Activated T-helper 1 cell treated with anti-CD3 and anti-CD28 coated beads, Interleukin-12 subunit alpha, Interleukin-12 subunit beta, Interleukin-2, Interleukin-4 antibody, amounts not matched to agents 30 ng/mL and 10 ng/mL and 1 ng/mL, durations not matched to agents 14 hours and 24 hours and 36 hours (primary cell): ENCODE measurements at regions of chr16 and their contacts with region 1.

Region 1: GRCh38 chr16:56608043-56608875 is at the start of gene MT2A:
- DNase-seq: peak; percentile 89
- H3K4me3 Mint-ChIP-seq: peak within 1 kb of the TSS; percentile 97
- H3K27ac Mint-ChIP-seq: peak within 1 kb of the TSS; percentile 98
- H3K4me1 Mint-ChIP-seq: peaks cover 58% of the 10 kb centered on the region
- H3K27me3 Mint-ChIP-seq: no peaks in the 10 kb centered on the region
- total RNA-seq, gene MT2A: 348 and 365 TPM in 2 replicates

Region 2: DNA sequence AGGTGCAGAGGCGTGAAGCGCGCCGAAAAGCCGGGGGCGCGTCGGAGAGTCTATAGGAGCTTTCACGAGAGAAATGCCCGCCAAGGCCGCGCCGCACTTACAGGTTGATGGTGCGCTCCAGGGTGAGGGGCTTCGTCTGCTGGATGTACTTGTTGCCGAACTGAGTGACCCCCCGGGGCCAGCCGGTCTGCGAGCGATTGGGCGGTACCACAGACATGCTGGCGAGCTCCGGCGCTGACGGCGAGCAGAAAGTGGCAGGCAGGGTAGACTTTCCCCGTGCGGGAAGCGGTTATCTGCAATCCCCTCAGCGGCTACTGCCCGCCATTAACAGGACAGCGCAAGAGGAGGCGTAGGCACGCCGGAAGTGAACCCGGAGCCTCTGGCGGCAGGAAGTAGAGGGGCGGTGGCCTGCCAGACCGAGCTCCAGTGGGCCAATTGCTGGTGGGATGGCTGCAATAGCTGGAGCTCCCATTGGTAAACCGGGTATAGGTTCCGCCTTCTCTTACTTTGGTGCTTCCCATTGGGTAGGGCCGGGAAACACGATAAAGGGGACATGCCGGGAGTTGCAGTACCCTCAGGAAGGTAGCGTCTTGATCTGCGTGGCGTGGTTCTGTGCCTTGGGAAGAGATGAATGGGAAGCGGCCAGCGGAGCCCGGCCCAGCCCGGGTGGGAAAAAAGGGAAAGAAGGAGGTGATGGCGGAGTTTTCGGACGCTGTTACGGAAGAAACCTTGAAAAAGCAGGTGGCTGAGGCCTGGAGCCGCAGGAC is 157.1 kb before region 1 on chr16 and contains the starts of genes NUDT21 and OGFOD1:
- intact Hi-C with region 1: loop called (anchors 1 kb)
- DNase-seq: peak; percentile 92
- H3K4me3 Mint-ChIP-seq: peak within 1 kb of the TSS; percentile 97
- H3K27ac Mint-ChIP-seq: peak within 1 kb of the TSS; percentile 97
- H3K4me1 Mint-ChIP-seq: peaks cover 65% of the 10 kb centered on the region
- H3K27me3 Mint-ChIP-seq: no peaks in the 10 kb centered on the region
- total RNA-seq, gene NUDT21: 271 and 313 TPM in 2 replicates
- total RNA-seq, gene OGFOD1: 87.9 and 90.9 TPM in 2 replicates

Region 3: DNA sequence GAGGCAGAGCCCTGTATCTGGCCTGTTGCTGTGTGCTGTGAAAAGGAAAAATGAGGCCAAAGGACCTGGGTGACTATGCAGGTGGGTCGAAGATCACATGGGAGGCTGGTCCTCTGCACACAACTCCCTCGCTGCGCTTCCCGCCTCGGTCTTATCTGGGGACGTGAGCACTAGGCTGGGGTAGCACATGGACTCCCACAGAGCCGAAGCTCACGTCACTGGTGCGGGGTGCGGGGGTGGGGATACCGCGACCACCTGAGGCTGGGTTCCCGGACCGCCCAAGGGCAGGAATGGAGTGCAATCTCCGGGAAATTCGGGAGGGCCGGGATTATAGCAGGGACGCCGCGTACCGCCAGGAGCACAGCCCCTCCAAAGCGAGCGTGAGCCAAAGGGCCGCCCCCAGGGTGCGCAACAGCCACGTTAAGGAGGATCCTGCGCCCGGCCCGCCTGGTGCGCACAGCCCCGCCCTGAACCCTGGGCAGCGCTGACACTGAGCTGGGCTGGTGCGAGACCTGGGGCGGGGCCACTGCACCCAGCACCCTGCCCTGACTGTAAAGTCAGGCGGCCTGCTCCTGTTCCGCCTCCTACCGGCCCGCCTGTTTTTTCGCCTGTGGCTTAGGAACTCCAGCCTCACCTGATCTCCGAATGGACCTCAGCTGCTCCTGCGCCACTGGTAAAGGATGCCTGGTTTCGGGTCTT is 35.0 kb after region 1 on chr16:
- intact Hi-C with region 1: loop called (anchors 1 kb)
- DNase-seq: peak; percentile 75
- H3K4me3 Mint-ChIP-seq: peak overlapping the region; percentile 70
- H3K27ac Mint-ChIP-seq: no peak overlapping the region
- H3K4me1 Mint-ChIP-seq: peaks cover 25% of the 10 kb centered on the region
- H3K27me3 Mint-ChIP-seq: peaks cover 52% of the 10 kb centered on the region

Region 4: DNA sequence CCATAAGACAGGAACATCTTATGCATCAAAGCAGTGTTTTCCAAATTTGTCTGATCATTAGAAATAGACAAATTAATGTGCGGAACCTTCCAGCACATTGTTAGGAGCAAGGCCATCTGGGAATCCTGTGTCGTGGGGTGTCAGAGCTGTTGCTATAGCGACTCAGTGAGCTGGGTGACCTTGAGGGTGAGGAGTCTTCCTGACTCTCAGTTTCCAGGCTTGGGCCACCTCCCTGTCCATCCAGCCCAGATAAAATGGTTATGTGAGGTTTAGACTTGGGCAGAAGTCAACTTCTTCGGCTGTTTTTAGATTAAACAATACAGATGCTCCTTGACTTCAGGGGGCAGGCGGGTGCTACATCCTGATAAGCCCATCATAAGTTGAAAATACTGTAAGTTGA is 94.6 kb after region 1 on chr16:
- intact Hi-C with region 1: loop called (anchors 1 kb)
- DNase-seq: no peak
- H3K4me3 Mint-ChIP-seq: no peak overlapping the region
- H3K27ac Mint-ChIP-seq: no peak overlapping the region
- H3K4me1 Mint-ChIP-seq: peaks cover 11% of the 10 kb centered on the region
- H3K27me3 Mint-ChIP-seq: peaks cover 11% of the 10 kb centered on the region

Region 5: DNA sequence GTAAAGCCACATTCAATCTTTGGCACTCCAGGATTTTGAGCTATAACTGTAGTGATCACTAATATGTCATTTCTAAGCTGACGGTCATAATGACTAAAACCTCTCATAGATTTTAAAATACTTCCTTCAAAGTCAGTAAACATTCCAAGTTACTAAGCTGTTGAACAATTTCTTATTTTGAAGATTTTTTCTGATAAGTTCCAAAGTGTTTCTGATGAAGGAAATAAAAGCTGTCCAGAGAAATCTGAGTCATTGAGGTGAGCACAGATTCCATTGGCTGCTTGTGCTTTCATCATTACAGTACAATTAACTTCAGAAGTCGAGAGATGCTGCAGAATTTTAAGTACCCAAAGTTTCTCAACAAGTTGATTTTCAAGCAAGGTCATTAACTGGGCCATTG is 405.0 kb after region 1 on chr16:
- intact Hi-C with region 1: loop called (anchors 1 kb)
- DNase-seq: no peak
- H3K4me3 Mint-ChIP-seq: peak overlapping the region; percentile 50
- H3K27ac Mint-ChIP-seq: peak overlapping the region; percentile 81
- H3K4me1 Mint-ChIP-seq: peaks cover 80% of the 10 kb centered on the region
- H3K27me3 Mint-ChIP-seq: no peaks in the 10 kb centered on the region

Region 6: DNA sequence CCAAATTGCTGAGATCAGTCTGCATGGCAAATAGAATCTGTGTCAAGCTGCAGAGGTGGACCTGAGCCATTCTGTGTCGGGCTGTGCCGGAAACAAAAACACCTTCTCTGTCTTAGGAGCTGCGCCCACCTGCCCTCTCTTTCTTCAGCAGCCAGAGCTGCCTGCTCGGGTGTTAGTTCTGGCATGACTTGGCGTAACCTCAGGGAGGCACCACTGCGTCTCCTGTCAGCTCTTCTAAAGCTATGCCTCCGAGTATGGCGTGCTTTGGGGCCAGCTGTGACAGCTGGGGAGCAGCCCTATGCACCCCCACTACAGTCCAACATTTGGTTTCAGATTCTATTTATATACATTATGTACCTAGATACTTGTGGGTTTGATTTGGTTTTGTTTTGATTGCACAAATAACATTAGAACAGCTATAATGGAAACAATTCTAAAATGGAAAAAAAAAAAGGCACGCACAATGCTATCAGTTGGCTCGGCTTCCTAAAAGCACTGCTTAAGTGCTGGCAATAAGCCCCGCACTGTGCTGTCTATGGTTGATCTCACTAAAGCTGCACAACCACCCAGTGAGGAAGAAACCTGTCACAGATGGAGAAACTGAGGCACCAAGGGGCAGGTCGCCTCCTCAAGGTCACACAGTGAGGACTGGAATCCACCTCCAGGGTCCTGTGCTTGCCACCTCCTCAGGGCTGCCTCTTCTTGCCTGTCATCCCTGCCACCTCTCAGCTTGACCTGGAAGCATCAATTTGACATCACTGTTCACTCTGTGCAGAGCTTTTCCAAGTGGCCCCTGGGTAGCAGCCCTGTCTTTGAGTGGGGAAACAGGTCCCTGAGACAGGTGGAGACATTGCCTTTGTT is 1001.5 kb after region 1 on chr16:
- intact Hi-C with region 1: loop called (anchors 5 kb)
- DNase-seq: peak; percentile 74
- H3K4me3 Mint-ChIP-seq: peak overlapping the region; percentile 69
- H3K27ac Mint-ChIP-seq: peak overlapping the region; percentile 99
- H3K4me1 Mint-ChIP-seq: peaks cover 68% of the 10 kb centered on the region
- H3K27me3 Mint-ChIP-seq: no peaks in the 10 kb centered on the region